ENCODE measurements at regions of chr22 and their contacts with region 1.

Region 1: GRCh38 chr22:45435544-45436139 is 22.1 kb downstream of the RIBC2 start:
- DNase-seq: peak; percentile 91
- ATAC-seq: peak; percentile 97

Region 2: GRCh38 chr22:45185718-45186514 is 249.7 kb before region 1 on chr22:
- intact Hi-C with region 1: no loop called
- DNase-seq: no peak
- ATAC-seq: no peak

Region 3: GRCh38 chr22:45268958-45269844 is 166.4 kb before region 1 on chr22:
- intact Hi-C with region 1: loop called (anchors 5 kb)
- DNase-seq: peak; percentile 95
- ATAC-seq: peak; percentile 78

Region 4: DNA sequence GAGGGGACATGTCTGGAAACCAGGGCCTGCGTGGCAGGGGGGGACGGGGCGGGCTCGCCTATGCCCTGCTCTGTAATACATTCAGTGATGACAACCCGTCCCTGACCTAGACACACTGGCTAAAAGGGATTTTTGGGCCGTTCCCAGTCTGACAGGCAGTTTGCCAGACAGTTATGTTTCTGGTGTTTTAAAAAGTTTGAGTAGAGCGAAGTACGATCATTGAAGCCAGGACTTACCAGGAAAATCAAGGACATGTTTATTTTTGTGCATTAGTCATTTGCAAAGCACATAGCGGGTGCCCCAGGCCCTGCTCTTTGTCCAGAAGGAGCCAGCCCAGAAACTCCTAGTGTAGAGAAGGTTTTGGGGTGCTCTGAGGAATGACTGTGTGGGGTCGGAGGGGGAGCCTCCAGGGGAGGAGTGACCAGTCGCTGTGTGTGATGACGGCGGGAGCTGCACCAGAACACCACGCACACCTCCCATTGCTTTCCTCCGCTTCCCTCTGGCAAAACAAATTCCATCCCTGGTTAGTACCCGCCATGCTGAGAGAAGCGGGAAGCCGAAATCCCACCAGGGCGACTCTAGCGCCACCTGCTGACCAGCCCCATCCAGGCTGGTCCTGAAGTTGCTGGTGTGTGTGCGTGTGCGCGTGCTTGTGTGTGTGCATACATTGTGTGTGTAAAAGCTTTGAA is 117.9 kb after region 1 on chr22:
- intact Hi-C with region 1: loop called (anchors 5 kb)
- DNase-seq: peak; percentile 87
- ATAC-seq: peak; percentile 57

Measured in left ventricle myocardium superior (tissue), 1 donor.